MCF 10A (cell line): ENCODE measurements at regions of chr10 and their contacts with region 1.

Region 1: DNA sequence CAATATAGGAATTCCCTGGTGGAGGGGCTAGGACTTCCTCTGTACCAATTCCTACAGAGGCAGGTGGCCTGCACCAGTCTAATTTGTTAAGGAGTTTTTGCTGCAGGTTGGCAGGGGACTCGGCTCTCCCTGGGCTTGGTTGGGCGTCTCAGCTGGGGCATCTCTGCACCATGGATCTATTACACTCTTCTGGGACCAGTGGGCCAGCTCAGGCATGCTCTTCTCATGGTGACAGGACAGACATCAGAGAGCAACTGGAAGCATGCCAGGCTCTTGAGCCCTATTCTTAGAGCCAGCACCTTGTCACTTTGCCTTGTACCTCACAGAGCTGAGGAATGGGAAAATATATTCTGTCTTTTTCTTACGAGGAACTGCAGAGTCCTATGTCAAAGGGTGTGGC is 74.6 kb downstream of the SH2D4B start:
- DNase-seq: peak; percentile 26
- H3K4me3 Mint-ChIP-seq: no peak overlapping the region
- H3K27ac Mint-ChIP-seq: no peak overlapping the region
- H3K4me1 Mint-ChIP-seq: no peaks in the 10 kb centered on the region
- H3K27me3 Mint-ChIP-seq: no peaks in the 10 kb centered on the region
- CTCF ChIP-seq: no peak

Region 2: GRCh38 chr10:80599424-80599847 is 12.8 kb before region 1 on chr10:
- CTCF ChIA-PET with region 1: interaction called, 23 read pairs
- POLR2A ChIA-PET with region 1: interaction called, 3 read pairs
- intact Hi-C with region 1: no loop called
- DNase-seq: peak; percentile 64
- H3K4me3 Mint-ChIP-seq: no peak overlapping the region
- H3K27ac Mint-ChIP-seq: no peak overlapping the region
- H3K4me1 Mint-ChIP-seq: no peaks in the 10 kb centered on the region
- H3K27me3 Mint-ChIP-seq: no peaks in the 10 kb centered on the region
- CTCF ChIP-seq: peak; percentile 67

Region 3: GRCh38 chr10:80771902-80772555 is 159.8 kb after region 1 on chr10:
- CTCF ChIA-PET with region 1: no interaction called
- POLR2A ChIA-PET with region 1: no interaction called
- intact Hi-C with region 1: no loop called
- DNase-seq: no peak
- H3K4me3 Mint-ChIP-seq: no peak overlapping the region
- H3K27ac Mint-ChIP-seq: no peak overlapping the region
- H3K4me1 Mint-ChIP-seq: no peaks in the 10 kb centered on the region
- H3K27me3 Mint-ChIP-seq: peaks cover 81% of the 10 kb centered on the region
- CTCF ChIP-seq: no peak